ENCODE measurements at regions of chr6 and their contacts with region 1.

Region 1: DNA sequence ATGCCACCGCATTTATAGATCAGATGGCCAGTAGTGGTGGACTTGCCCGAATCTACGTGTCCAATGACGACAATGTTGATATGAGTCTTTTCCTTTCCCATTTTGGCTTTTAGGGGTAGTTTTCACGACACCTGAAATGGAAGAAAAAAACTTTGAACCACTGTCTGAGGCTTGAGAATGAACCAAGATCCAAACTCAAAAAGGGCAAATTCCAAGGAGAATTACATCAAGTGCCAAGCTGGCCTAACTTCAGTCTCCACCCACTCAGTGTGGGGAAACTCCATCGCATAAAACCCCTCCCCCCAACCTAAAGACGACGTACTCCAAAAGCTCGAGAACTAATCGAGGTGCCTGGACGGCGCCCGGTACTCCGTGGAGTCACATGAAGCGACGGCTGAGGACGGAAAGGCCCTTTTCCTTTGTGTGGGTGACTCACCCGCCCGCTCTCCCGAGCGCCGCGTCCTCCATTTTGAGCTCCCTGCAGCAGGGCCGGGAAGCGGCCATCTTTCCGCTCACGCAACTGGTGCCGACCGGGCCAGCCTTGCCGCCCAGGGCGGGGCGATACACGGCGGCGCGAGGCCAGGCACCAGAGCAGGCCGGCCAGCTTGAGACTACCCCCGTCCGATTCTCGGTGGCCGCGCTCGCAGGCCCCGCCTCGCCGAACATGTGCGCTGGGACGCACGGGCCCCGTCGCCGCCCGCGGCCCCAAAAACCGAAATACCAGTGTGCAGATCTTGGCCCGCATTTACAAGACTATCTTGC is 725 bp downstream of the EEF1A1 start:
- DNase-seq: peak; percentile 68 to 95 (median 77)
- H3K4me3 ChIP-seq: peak overlapping the region; percentile 95 to 98 (median 98)
- H3K27ac ChIP-seq: peak overlapping the region; percentile 99 to 100
- H3K4me1 ChIP-seq: peaks cover 3 to 34% (median 16%) of the 10 kb centered on the region in 3 donors
- H3K27me3 ChIP-seq: no peaks in the 10 kb centered on the region
- CTCF ChIP-seq: no peak

Region 2: DNA sequence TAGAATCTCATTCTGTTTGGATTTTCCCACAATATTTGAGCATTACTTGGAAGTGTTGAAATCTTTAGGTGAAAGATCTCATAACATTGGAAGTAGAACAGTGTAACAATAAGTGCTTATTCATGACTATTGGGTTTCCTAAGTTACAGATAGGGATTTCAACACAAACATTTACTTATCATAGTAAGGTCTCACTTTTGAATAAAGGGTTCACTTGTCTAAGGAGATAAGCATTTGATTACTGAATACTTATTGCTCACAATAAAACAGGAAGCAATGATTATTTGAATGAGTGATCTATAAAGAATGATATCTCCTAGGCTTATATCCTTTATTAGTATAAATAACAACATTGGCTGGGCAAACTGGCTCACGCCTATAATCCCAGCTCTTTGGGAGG is 110.7 kb before region 1 on chr6:
- intact Hi-C with region 1: no loop called
- DNase-seq: no peak
- H3K4me3 ChIP-seq: no peak overlapping the region
- H3K27ac ChIP-seq: no peak overlapping the region
- H3K4me1 ChIP-seq: no peaks in the 10 kb centered on the region
- H3K27me3 ChIP-seq: no peaks in the 10 kb centered on the region
- CTCF ChIP-seq: no peak

Region 3: DNA sequence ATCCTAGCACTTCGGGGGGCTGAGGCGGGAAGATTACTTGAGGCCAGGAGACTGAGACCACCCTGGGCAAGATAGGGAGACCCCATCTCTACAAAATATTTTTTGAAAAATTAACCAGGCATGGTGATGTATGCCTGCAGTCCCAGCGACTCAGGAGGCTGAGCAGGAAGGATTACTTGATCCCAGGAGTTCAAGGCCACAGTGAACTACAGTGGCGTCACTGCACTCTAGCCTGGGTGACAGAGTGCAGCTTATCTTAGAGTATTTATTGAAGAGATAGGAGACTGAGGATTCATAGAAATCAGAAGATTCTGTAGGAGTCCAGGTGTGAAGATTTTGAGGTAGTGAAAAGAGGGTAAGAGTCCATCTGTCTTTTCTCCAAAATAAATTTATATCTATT is 88.7 kb after region 1 on chr6:
- intact Hi-C with region 1: loop called (anchors 5 kb)
- DNase-seq: no peak
- H3K4me3 ChIP-seq: no peak overlapping the region
- H3K27ac ChIP-seq: no peak overlapping the region
- H3K4me1 ChIP-seq: no peaks in the 10 kb centered on the region
- H3K27me3 ChIP-seq: no peaks in the 10 kb centered on the region
- CTCF ChIP-seq: no peak

Measured in kidney (tissue), 22 donors.